CD4-positive, alpha-beta T cell (primary cell): ENCODE measurements at regions of chr11 and their contacts with region 1.

Region 1: DNA sequence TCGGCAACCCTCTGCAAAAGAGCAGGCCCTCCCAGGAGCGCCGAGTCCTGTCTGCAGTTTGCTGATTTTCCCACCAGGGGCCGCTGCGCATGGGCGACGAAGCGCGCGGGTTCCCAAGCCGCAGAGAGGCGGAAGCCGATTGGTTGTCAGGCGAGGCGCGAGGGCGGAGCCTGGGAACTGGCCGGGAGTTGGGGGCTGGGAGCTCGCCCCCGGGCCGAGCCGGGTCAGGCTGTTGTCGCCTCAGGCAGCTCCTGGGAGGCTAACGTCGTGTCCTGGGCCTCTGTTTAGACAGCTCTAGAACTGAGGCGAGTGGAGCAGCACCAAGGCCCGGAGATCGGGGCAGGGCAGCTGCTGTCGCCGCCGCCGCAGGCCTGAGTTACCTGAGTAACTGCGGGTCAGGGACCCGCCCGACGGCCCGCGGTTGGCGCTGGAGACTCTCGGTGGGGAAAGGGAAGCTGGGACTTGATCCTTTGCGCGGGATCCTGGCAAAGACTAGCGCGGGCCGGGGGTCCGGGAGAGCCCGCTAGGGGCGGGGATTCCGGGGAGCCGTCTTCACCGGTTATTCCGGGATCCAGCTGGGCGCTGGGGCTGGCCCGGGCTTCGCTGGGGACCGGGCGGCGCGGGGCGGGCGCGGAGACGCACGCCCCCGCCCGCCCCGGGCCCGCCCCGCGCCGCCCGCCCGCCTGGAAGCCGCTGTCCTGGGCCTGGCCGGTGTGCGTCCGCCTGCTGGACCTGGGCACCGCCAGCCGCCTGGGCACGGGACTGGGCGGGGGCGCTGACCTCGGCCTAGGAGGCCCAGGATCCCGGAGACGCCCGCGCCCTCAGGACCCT is at the start of gene STIM1:
- DNase-seq: peak; percentile 92 to 99 (median 97)
- ATAC-seq: peak; percentile 69
- H3K4me3 ChIP-seq: peak within 1 kb of the TSS; percentile 95
- H3K4me3 Mint-ChIP-seq: peak within 1 kb of the TSS; percentile 89
- H3K27ac ChIP-seq: peak within 1 kb of the TSS; percentile 88 to 91
- H3K27ac Mint-ChIP-seq: peak within 1 kb of the TSS; percentile 99
- H3K4me1 ChIP-seq: peaks cover 63% of the 10 kb centered on the region
- H3K4me1 Mint-ChIP-seq: peaks cover 67% of the 10 kb centered on the region
- H3K27me3 ChIP-seq: no peaks in the 10 kb centered on the region
- H3K27me3 Mint-ChIP-seq: no peaks in the 10 kb centered on the region
- CTCF ChIP-seq: peak; percentile 94
- total RNA-seq, gene STIM1: 89.0 to 94.9 TPM

Region 2: GRCh38 chr11:3797329-3798095 is 57.7 kb before region 1 on chr11 and contains the start of gene NUP98:
- CTCF ChIA-PET with region 1: interaction called, 5 read pairs
- POLR2A ChIA-PET with region 1: interaction called, 34 read pairs
- intact Hi-C with region 1: no loop called
- DNase-seq: peak; percentile 98 to 100 (median 99)
- ATAC-seq: peak; percentile 93
- H3K4me3 ChIP-seq: peak within 1 kb of the TSS; percentile 98
- H3K4me3 Mint-ChIP-seq: peak within 1 kb of the TSS; percentile 89
- H3K27ac ChIP-seq: peak within 1 kb of the TSS; percentile 95
- H3K27ac Mint-ChIP-seq: peak within 1 kb of the TSS; percentile 97
- H3K4me1 ChIP-seq: peaks cover 37% of the 10 kb centered on the region
- H3K4me1 Mint-ChIP-seq: peaks cover 46% of the 10 kb centered on the region
- H3K27me3 ChIP-seq: no peaks in the 10 kb centered on the region
- H3K27me3 Mint-ChIP-seq: no peaks in the 10 kb centered on the region
- CTCF ChIP-seq: no peak
- total RNA-seq, gene NUP98: 161 to 186 TPM

Region 3: DNA sequence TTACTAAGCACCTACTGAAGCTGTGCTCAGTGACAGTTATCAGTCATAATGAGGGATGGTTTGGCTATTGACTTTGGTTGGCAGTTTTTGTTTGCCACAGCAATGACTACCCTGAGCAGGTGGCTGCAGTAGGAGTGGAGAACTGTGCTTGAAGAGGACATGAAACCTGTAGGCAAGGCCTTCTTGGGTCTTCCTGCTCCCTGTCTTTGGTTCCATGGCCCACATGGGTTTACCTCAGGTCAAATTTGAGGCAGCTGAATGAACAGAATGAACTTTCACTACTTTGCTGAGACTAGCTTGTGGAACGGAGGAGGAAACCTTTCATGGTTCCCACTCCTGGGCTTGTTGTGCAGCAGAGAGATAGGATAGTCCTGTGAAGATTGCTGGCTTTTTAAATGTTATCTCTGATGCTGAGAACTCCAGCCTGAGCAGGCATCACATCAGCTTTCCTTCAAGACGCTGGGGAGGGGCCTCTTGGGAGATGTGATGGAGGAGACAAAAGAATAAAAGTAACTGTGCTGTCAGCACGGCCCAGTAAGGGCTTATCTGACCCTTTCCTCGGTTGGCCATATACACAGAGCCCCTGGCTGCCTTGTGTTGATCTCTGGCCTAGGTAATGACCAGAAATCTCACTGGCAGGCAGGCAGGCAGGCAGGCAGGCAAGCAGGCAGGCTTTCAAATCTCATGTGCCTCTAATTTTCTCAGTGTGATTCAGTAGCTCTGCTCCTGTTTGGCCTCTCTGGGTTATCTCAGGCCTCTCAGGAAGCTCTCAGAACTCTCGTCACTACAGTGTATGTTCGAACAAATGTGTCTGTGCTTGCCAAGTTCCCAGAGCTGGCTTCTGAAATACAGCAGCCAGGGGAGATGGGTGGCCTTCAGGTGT is 12.3 kb after region 1 on chr11:
- CTCF ChIA-PET with region 1: interaction called, 49 read pairs
- POLR2A ChIA-PET with region 1: interaction called, 100 read pairs
- intact Hi-C with region 1: no loop called
- DNase-seq: peak in 1 of 14 experiments; percentile 28
- ATAC-seq: peak; percentile 42
- H3K4me3 ChIP-seq: no peak overlapping the region
- H3K4me3 Mint-ChIP-seq: peak overlapping the region; percentile 11
- H3K27ac ChIP-seq: no peak overlapping the region
- H3K27ac Mint-ChIP-seq: peak overlapping the region; percentile 90
- H3K4me1 ChIP-seq: peaks cover 67% of the 10 kb centered on the region
- H3K4me1 Mint-ChIP-seq: peaks cover 86% of the 10 kb centered on the region
- H3K27me3 ChIP-seq: no peaks in the 10 kb centered on the region
- H3K27me3 Mint-ChIP-seq: no peaks in the 10 kb centered on the region
- CTCF ChIP-seq: no peak

Region 4: DNA sequence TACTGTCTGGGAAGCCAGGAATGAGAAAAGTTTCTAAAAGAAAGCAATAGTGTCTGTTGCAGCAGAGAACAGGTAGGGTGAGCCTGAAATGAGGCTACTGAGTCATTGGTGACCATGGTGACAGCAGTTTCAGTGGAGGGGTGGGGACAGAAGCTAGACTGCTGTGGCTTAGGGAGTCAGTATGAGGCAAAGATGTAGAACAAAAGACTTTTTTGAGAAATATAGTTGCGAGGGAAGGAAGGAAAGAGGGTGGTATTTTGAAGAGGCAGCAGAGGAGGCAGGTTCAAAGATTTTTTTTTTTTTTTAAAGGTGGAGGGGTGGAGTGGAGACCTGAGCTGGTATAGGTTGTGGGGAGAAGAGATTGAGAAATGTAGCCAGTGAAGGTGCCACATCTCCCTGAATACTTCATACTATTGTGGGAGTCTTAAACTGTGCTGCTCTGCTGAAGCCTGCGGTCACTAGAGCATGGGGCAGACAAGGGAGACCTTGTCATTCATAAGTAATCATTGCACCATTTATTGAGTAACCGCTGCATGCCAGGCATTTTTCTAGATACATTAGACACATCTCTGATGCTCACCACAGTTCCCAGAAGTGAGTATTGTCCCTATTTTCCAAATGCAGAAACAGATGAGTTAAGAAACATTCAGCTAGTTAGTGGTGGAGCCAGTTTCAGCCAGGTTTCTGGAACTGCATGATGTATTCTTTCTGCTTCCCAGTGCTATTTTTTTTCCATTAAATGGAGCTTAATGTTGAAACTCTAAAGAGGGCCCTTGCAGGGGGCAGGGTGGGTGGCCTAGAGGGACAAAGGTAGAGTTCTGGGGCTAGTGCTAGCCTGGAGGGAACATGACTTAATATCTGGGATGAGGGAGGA is 50.1 kb after region 1 on chr11:
- CTCF ChIA-PET with region 1: interaction called, 26 read pairs
- POLR2A ChIA-PET with region 1: interaction called, 15 read pairs
- intact Hi-C with region 1: loop called (anchors 5 kb)
- DNase-seq: peak; percentile 24 to 84 (median 62)
- ATAC-seq: peak; percentile 95
- H3K4me3 ChIP-seq: no peak overlapping the region
- H3K4me3 Mint-ChIP-seq: peak overlapping the region; percentile 6
- H3K27ac ChIP-seq: peak overlapping the region in 1 of 2 donors; percentile 45
- H3K27ac Mint-ChIP-seq: peak overlapping the region; percentile 76
- H3K4me1 ChIP-seq: peaks cover 66% of the 10 kb centered on the region
- H3K4me1 Mint-ChIP-seq: peaks cover 91% of the 10 kb centered on the region
- H3K27me3 ChIP-seq: no peaks in the 10 kb centered on the region
- H3K27me3 Mint-ChIP-seq: no peaks in the 10 kb centered on the region
- CTCF ChIP-seq: no peak

Region 5: DNA sequence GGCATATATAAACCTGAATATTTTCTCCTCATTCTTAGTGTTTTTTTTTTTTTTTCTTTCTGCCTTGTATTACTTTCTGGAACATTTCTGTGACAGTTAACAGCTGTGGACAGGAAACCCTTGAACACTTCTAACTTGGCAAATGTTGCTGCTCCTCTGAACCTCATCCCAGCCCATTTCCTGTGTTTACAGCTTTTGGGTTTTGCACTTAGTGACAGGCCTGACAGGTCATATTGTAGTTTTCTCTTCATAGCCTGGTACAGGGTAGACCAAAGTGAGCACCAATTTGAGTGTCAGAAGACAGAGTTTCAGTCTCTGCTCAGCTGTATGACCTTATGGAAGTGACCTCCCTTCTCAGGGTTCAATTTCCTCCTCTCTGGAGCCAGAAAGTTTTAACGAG is 91.9 kb after region 1 on chr11:
- CTCF ChIA-PET with region 1: interaction called, 18 read pairs
- POLR2A ChIA-PET with region 1: interaction called, 60 read pairs
- intact Hi-C with region 1: loop called (anchors 2 to 5 kb)
- DNase-seq: peak in 13 of 14 experiments; percentile 25 to 94 (median 42)
- ATAC-seq: peak; percentile 75
- H3K4me3 ChIP-seq: peak overlapping the region; percentile 39
- H3K4me3 Mint-ChIP-seq: peak overlapping the region; percentile 72
- H3K27ac ChIP-seq: peak overlapping the region; percentile 80 to 87
- H3K27ac Mint-ChIP-seq: peak overlapping the region; percentile 96
- H3K4me1 ChIP-seq: peaks cover 87% of the 10 kb centered on the region
- H3K4me1 Mint-ChIP-seq: peaks cover 95% of the 10 kb centered on the region
- H3K27me3 ChIP-seq: no peaks in the 10 kb centered on the region
- H3K27me3 Mint-ChIP-seq: no peaks in the 10 kb centered on the region
- CTCF ChIP-seq: no peak

Region 6: DNA sequence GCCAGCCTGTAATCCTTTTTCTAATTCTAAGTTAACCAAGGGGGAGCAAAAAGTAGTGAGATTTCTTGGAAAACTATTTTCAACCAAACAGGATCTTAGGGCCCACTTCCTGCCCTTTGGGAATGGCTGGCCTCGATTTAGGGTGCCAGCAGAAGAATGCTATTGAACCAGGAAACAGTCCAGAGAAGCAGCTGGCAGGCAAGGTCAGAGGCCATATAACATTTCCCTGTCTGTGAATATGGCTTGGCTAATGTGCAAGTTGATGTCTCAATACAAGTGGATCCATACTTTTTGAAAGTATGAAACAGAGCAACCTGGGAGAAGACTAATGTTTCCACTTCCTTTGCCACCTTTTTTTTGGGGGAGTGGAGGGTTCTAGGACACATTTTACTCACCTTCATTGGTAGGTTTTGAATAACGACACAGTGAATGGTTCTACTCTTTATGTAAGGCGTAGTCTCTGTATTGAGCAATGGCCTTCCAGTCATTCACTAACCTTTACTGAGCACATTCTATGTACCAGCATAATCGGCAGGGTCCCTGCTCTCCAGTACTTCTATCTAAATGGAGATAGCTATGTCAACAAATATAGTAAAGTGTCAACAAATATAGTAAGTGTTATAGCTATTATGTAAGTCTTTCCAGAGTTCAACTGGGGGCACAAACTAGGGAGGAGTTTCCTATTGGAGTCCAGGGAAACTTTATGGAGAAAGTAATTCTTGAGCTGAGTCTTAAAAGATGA is 205.2 kb after region 1 on chr11:
- CTCF ChIA-PET with region 1: interaction called, 11 read pairs
- POLR2A ChIA-PET with region 1: interaction called, 23 read pairs
- intact Hi-C with region 1: no loop called
- DNase-seq: no peak
- ATAC-seq: no peak
- H3K4me3 ChIP-seq: no peak overlapping the region
- H3K4me3 Mint-ChIP-seq: no peak overlapping the region
- H3K27ac ChIP-seq: no peak overlapping the region
- H3K27ac Mint-ChIP-seq: peak overlapping the region; percentile 76
- H3K4me1 ChIP-seq: peaks cover 23% of the 10 kb centered on the region
- H3K4me1 Mint-ChIP-seq: peaks cover 57% of the 10 kb centered on the region
- H3K27me3 ChIP-seq: no peaks in the 10 kb centered on the region
- H3K27me3 Mint-ChIP-seq: no peaks in the 10 kb centered on the region
- CTCF ChIP-seq: no peak

Region 7: GRCh38 chr11:4087551-4087950 is 232.4 kb after region 1 on chr11:
- CTCF ChIA-PET with region 1: interaction called, 6 read pairs
- POLR2A ChIA-PET with region 1: interaction called, 7 read pairs
- intact Hi-C with region 1: loop called in 1 of 2 experiments (anchors 1 kb)
- DNase-seq: no peak
- ATAC-seq: no peak
- H3K4me3 ChIP-seq: no peak overlapping the region
- H3K4me3 Mint-ChIP-seq: no peak overlapping the region
- H3K27ac ChIP-seq: no peak overlapping the region
- H3K27ac Mint-ChIP-seq: peak overlapping the region; percentile 97
- H3K4me1 ChIP-seq: peaks cover 54% of the 10 kb centered on the region
- H3K4me1 Mint-ChIP-seq: peaks cover 57% of the 10 kb centered on the region
- H3K27me3 ChIP-seq: no peaks in the 10 kb centered on the region
- H3K27me3 Mint-ChIP-seq: no peaks in the 10 kb centered on the region
- CTCF ChIP-seq: no peak